Activated CD4-positive, alpha-beta T cell treated with anti-CD3 and anti-CD28 coated beads, Interleukin-2, amount 10 ng/mL, durations not matched to agents 24 days and 14 days (primary cell): ENCODE measurements at regions of chr5 and their contacts with region 1.

Region 1: DNA sequence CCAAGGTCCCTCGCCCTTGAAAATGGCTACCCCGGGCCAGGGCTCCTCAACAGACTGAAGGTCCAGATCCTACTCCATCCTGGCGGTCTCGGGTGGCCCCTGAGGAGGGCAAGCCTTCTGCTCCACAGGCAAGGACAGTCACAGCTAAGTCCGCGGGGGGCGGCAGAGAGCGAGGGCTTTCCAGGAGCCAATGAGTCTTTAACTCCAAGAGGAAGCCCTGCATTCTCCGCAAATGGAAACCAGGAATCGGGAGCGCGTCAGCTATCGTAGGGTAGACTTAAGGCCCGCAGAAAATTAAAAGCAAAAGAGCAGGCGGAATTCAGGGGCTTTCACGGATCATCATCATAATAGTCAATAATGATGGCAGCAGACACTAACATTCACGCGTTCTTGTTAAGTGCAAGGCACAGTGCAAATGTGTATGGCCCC is 87.8 kb upstream of the TNFAIP8 start:
- DNase-seq: peak; percentile 93
- H3K4me3 Mint-ChIP-seq: peak overlapping the region; percentile 95
- H3K27ac Mint-ChIP-seq: peak overlapping the region; percentile 97
- H3K4me1 Mint-ChIP-seq: peaks cover 54% of the 10 kb centered on the region
- H3K27me3 Mint-ChIP-seq: no peaks in the 10 kb centered on the region

Region 2: DNA sequence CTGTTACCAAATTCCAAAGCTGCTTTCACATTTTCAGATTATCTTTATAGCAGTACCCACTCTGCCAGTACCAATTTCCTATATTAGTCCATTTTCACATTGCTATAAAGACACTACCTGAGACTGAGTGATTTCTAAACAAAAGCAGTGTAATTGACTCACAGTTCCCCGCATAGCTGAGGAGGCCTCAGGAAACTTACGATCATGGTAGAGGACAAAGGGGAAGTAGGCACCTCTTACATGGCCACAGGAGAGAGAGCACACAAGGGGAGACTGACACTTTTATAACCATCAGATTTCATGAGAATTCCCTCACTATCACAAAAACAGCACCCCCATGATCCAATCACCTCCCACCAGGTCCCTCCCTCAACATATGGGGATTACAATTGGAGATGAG is 384.6 kb before region 1 on chr5:
- intact Hi-C with region 1: no loop called
- DNase-seq: no peak
- H3K4me3 Mint-ChIP-seq: no peak overlapping the region
- H3K27ac Mint-ChIP-seq: no peak overlapping the region
- H3K4me1 Mint-ChIP-seq: no peaks in the 10 kb centered on the region
- H3K27me3 Mint-ChIP-seq: no peaks in the 10 kb centered on the region

Region 3: GRCh38 chr5:119070828-119071572 is 197.0 kb before region 1 on chr5 and contains the start of gene DMXL1:
- intact Hi-C with region 1: loop called (anchors 1 kb)
- DNase-seq: peak; percentile 99
- H3K4me3 Mint-ChIP-seq: peak within 1 kb of the TSS; percentile 94
- H3K27ac Mint-ChIP-seq: peak within 1 kb of the TSS; percentile 95
- H3K4me1 Mint-ChIP-seq: peaks cover 30% of the 10 kb centered on the region
- H3K27me3 Mint-ChIP-seq: no peaks in the 10 kb centered on the region
- total RNA-seq, gene DMXL1: 22.4 and 25.6 TPM in 2 replicates

Region 4: DNA sequence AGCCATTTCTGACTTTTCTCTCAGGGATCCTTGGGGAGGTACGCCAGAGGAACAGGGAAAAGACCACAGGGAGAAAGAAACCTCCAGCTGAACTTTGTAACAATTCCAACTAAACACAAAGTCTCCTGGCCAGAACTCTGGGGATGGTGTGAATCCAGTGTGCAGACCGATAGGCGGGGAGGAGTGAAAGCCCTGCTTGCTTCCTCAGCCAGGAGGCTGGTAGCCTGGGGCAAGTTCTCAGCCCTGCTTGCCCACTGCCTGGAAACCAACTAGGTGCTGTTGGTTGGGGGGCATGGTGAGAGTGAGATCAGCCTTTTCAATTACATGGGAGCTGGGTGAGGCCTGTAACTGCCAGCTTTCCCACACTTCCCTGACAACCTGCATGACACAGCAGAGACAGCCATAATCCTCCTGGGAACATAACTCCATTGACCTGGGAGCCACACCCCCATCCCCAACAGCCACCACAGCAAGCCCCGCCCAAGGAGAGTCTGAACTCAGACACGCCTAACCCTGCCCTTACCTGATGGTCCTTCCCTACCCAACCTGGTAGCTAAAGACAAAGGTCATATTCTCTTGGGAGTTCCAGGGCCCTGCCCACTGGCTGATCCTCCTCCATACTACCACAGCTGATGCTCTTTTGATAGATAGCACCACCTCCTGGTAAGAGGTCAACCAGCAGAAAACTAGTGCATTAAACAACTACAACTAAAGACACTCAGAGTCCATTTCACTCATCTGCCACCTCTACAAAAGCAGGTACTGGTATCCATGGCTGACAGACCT is 12.2 kb before region 1 on chr5:
- intact Hi-C with region 1: no loop called
- DNase-seq: peak; percentile 61
- H3K4me3 Mint-ChIP-seq: no peak overlapping the region
- H3K27ac Mint-ChIP-seq: peak overlapping the region; percentile 13
- H3K4me1 Mint-ChIP-seq: peaks cover 7% of the 10 kb centered on the region
- H3K27me3 Mint-ChIP-seq: no peaks in the 10 kb centered on the region

Region 5: GRCh38 chr5:119300311-119300670 is 32.3 kb after region 1 on chr5:
- intact Hi-C with region 1: loop called (anchors 1 kb)
- DNase-seq: no peak
- H3K4me3 Mint-ChIP-seq: peak overlapping the region; percentile 92
- H3K27ac Mint-ChIP-seq: peak overlapping the region; percentile 98
- H3K4me1 Mint-ChIP-seq: peaks cover 60% of the 10 kb centered on the region
- H3K27me3 Mint-ChIP-seq: no peaks in the 10 kb centered on the region

Region 6: GRCh38 chr5:119328753-119329602 is 61.0 kb after region 1 on chr5:
- intact Hi-C with region 1: loop called (anchors 2 kb)
- DNase-seq: peak; percentile 86
- H3K4me3 Mint-ChIP-seq: peak overlapping the region; percentile 73
- H3K27ac Mint-ChIP-seq: peak overlapping the region; percentile 92
- H3K4me1 Mint-ChIP-seq: peaks cover 74% of the 10 kb centered on the region
- H3K27me3 Mint-ChIP-seq: no peaks in the 10 kb centered on the region